ENCODE measurements at regions of chr18 and their contacts with region 1.

Region 1: DNA sequence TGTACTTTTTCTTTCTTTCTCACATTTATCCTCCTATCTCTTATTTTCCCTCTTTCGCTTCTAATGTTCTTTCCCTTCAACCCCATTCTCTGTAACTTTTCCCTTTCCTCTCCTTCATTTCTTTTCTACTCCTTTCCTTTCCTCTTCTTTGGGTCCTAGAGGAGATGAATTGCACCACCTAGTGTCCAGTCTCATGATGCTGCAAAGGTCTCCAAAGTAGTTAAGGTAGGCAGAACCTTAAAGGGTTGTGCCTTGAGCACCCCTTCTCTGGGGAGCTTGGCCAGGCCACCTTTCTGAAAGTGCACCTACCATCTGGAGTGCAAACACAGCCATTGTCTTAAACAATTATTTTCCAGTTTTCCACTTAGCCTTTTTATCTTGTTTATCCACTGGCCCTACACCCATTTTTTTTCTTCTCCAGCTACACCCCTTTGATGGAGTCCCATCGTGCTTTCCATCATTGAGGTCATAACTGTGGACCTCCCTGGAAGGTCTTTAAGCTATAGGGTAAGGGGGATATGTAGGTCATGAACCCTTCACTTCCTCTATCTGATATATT is 156.0 kb downstream of the ESCO1 start:
- DNase-seq: peak; percentile 56
- CTCF ChIP-seq: peak; percentile 77

Region 2: GRCh38 chr18:21203096-21203495 is 241.4 kb before region 1 on chr18:
- in situ Hi-C with region 1: loop called (anchors 10 kb)
- DNase-seq: no peak
- CTCF ChIP-seq: no peak

Region 3: GRCh38 chr18:21330122-21330701 is 114.3 kb before region 1 on chr18:
- in situ Hi-C with region 1: loop called (anchors 25 kb)
- DNase-seq: no peak
- CTCF ChIP-seq: no peak